Head of caudate nucleus (tissue), 42 donors: ENCODE measurements at regions of chr3 and their contacts with region 1.

Region 1: GRCh38 chr3:122514123-122515019 is at the start of gene KPNA1:
- DNase-seq: peak; percentile 70 to 95 (median 90)

Region 2: DNA sequence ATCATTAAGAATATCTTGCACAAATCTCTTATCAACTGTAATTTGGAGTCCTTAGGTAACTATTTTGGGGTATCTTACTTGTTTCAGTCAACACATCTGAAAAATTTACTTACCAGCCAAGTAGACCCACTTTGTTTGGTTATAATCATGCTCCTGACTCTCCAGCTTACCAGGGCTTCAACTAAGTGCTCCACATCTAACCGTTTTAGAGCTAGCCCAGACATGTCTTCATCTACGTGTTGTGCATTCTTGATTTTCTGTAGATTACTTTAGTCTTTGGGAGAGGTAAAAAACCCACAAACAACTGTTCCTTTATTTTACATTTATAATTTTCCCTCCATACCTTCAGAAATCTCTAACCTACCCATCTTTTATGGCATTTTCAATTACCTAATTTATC is 662.1 kb before region 1 on chr3:
- intact Hi-C with region 1: no loop called
- DNase-seq: no peak

Region 3: GRCh38 chr3:122415720-122416654 is 98.4 kb before region 1 on chr3 and contains the start of gene WDR5B:
- intact Hi-C with region 1: loop called (anchors 2 kb)
- DNase-seq: peak; percentile 93 to 99 (median 97)

Region 4: GRCh38 chr3:122548076-122548475 is 33.7 kb after region 1 on chr3:
- intact Hi-C with region 1: no loop called
- DNase-seq: no peak